ENCODE measurements at regions of chr2 and their contacts with region 1.

Region 1: GRCh38 chr2:30293303-30293921 is 62.1 kb downstream of the LBH start:
- DNase-seq: peak; percentile 100
- ATAC-seq: peak; percentile 88
- H3K4me3 ChIP-seq: no peak overlapping the region
- H3K27ac ChIP-seq: peak overlapping the region; percentile 95
- H3K4me1 ChIP-seq: peaks cover 19% of the 10 kb centered on the region
- H3K27me3 ChIP-seq: no peaks in the 10 kb centered on the region
- CTCF ChIP-seq: no peak
- POLR2A ChIP-seq: peak; percentile 63
- RAD21 ChIP-seq: peak; percentile 47

Region 2: GRCh38 chr2:30275256-30275655 is 18.2 kb before region 1 on chr2:
- CTCF ChIA-PET with region 1: no interaction called
- POLR2A ChIA-PET with region 1: interaction called, 3 read pairs
- dilution Hi-C with region 1: no loop called
- in situ Hi-C with region 1: no loop called
- intact Hi-C with region 1: loop called (anchors 1 kb)
- DNase-seq: no peak
- ATAC-seq: no peak
- H3K4me3 ChIP-seq: no peak overlapping the region
- H3K27ac ChIP-seq: no peak overlapping the region
- H3K4me1 ChIP-seq: peaks cover 31% of the 10 kb centered on the region
- H3K27me3 ChIP-seq: no peaks in the 10 kb centered on the region
- CTCF ChIP-seq: no peak
- POLR2A ChIP-seq: no peak
- RAD21 ChIP-seq: no peak

Region 3: GRCh38 chr2:30421604-30422443 is 128.4 kb after region 1 on chr2:
- CTCF ChIA-PET with region 1: no interaction called
- POLR2A ChIA-PET with region 1: no interaction called
- dilution Hi-C with region 1: no loop called
- in situ Hi-C with region 1: no loop called
- intact Hi-C with region 1: loop called (anchors 2 kb)
- DNase-seq: peak; percentile 84
- ATAC-seq: peak; percentile 71
- H3K4me3 ChIP-seq: no peak overlapping the region
- H3K27ac ChIP-seq: peak overlapping the region; percentile 93
- H3K4me1 ChIP-seq: peaks cover 23% of the 10 kb centered on the region
- H3K27me3 ChIP-seq: no peaks in the 10 kb centered on the region
- CTCF ChIP-seq: no peak
- POLR2A ChIP-seq: no peak
- RAD21 ChIP-seq: no peak

Region 4: GRCh38 chr2:30666307-30666874 is 373.0 kb after region 1 on chr2:
- CTCF ChIA-PET with region 1: no interaction called
- POLR2A ChIA-PET with region 1: interaction called, 3 read pairs
- dilution Hi-C with region 1: no loop called
- in situ Hi-C with region 1: no loop called
- intact Hi-C with region 1: loop called (anchors 2 kb)
- DNase-seq: peak; percentile 99
- ATAC-seq: peak; percentile 73
- H3K4me3 ChIP-seq: no peak overlapping the region
- H3K27ac ChIP-seq: peak overlapping the region; percentile 99
- H3K4me1 ChIP-seq: peaks cover 26% of the 10 kb centered on the region
- H3K27me3 ChIP-seq: no peaks in the 10 kb centered on the region
- CTCF ChIP-seq: no peak
- POLR2A ChIP-seq: no peak; the same call in 1 of the 2 replicates
- RAD21 ChIP-seq: no peak

Measured in IMR-90 (cell line).